ENCODE measurements at regions of chr2 and their contacts with region 1.

Region 1: GRCh38 chr2:225100856-225101294 is 58.6 kb upstream of the DOCK10 start:
- DNase-seq: no peak
- H3K4me3 ChIP-seq: no peak overlapping the region
- CTCF ChIP-seq: no peak
- POLR2A ChIP-seq: no peak

Region 2: GRCh38 chr2:225137971-225138370 is 37.1 kb after region 1 on chr2:
- intact Hi-C with region 1: loop called (anchors 1 kb)
- DNase-seq: no peak
- H3K4me3 ChIP-seq: no peak overlapping the region
- CTCF ChIP-seq: no peak
- POLR2A ChIP-seq: no peak

Region 3: DNA sequence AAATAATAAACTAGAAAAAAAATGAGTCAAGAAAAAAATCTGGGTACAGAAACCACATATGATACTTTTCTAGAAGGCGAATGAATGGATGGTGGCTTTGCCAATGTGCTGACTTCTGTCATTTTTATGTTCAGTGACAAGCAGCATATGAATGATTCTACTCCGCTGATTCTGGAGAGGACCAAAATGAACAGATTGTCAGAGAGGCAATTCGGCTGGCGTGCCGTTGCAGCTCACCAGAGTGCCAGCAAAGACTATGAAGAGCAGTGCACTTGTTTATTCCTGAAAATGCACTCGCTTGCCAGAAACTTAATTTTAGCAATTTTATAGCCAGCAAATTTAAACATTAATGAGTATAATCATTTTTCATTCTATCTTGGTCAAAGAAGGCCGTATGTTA is 192.8 kb after region 1 on chr2:
- intact Hi-C with region 1: no loop called
- DNase-seq: no peak
- H3K4me3 ChIP-seq: no peak overlapping the region
- CTCF ChIP-seq: no peak
- POLR2A ChIP-seq: no peak